H1 (cell line): ENCODE measurements at regions of chr3 and their contacts with region 1.

Region 1: DNA sequence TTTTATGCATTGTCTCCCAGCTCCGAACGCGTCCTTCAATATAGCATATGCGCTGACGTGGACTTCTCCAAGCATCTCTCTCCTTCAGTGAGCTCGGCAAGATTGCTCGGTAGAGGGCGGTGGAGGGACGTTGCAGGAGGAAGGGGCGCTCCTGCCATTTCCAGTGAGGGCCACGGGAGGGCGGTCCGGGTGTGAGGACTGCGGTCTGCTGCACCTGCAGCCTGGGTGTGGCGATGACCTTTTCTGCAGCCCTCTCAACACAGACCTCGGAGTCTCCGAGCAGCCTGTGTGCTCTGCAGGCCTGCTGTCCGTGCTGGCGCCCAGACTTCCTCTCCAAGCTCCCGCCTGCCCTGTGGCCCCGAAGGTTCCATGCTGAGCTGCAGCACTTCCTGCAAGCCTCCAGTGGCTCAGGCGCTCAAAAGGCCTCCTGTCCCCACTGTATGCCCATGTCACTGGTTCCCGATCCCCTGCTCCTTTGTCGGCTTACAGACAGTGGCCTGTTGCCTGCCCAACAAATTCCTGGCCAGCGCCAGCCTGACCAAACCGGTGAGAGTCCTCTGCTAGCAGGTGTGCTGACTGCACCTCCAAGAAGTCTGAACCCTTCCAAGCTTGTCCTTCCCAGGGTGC is 8.9 kb upstream of the RTP3 start:
- DNase-seq: peak; percentile 92 to 98
- H3K4me3 ChIP-seq: no peak overlapping the region
- H3K27ac ChIP-seq: no peak overlapping the region
- H3K4me1 ChIP-seq: peaks cover 4 to 8% (median 6%) of the 10 kb centered on the region in 4 experiments; a peak in 6 of 7 replicates
- H3K27me3 ChIP-seq: no peaks in the 10 kb centered on the region; a peak in 2 of 7 replicates
- CTCF ChIP-seq: peak; percentile 100
- EP300 ChIP-seq: peak; percentile 10 to 47; a peak in 2 of 3 replicates
- POLR2A ChIP-seq: no peak
- RAD21 ChIP-seq: peak; percentile 99 to 100

Region 2: GRCh38 chr3:46395210-46395731 is 93.6 kb before region 1 on chr3:
- CTCF ChIA-PET with region 1: no interaction called
- POLR2A ChIA-PET with region 1: no interaction called
- DNase-seq: no peak
- H3K4me3 ChIP-seq: no peak overlapping the region
- H3K27ac ChIP-seq: no peak overlapping the region
- H3K4me1 ChIP-seq: peaks cover 0 to 6% (median under 1%) of the 10 kb centered on the region in 4 experiments; a peak in 1 of 7 replicates
- H3K27me3 ChIP-seq: no peaks in the 10 kb centered on the region
- CTCF ChIP-seq: peak; percentile 53 to 56 (median 56)
- EP300 ChIP-seq: no peak
- POLR2A ChIP-seq: no peak
- RAD21 ChIP-seq: peak in 1 of 2 experiments; percentile 38; a peak in 2 of 4 replicates

Region 3: GRCh38 chr3:46449755-46450552 is 38.9 kb before region 1 on chr3:
- CTCF ChIA-PET with region 1: interaction called, 11 read pairs
- POLR2A ChIA-PET with region 1: no interaction called
- DNase-seq: peak in 1 of 2 experiments; percentile 67
- H3K4me3 ChIP-seq: no peak overlapping the region
- H3K27ac ChIP-seq: no peak overlapping the region
- H3K4me1 ChIP-seq: no peaks in the 10 kb centered on the region
- H3K27me3 ChIP-seq: no peaks in the 10 kb centered on the region
- CTCF ChIP-seq: peak; percentile 49 to 76 (median 59)
- EP300 ChIP-seq: no peak
- POLR2A ChIP-seq: no peak
- RAD21 ChIP-seq: peak; percentile 40 to 51

Region 4: GRCh38 chr3:46477145-46477544 is 11.7 kb before region 1 on chr3:
- CTCF ChIA-PET with region 1: interaction called, 38 read pairs
- POLR2A ChIA-PET with region 1: no interaction called
- DNase-seq: no peak
- H3K4me3 ChIP-seq: no peak overlapping the region
- H3K27ac ChIP-seq: no peak overlapping the region
- H3K4me1 ChIP-seq: no peaks in the 10 kb centered on the region
- H3K27me3 ChIP-seq: no peaks in the 10 kb centered on the region; a peak in 1 of 7 replicates
- CTCF ChIP-seq: no peak
- EP300 ChIP-seq: no peak
- POLR2A ChIP-seq: no peak
- RAD21 ChIP-seq: no peak

Region 5: GRCh38 chr3:46558184-46559043 is 69.6 kb after region 1 on chr3:
- CTCF ChIA-PET with region 1: interaction called, 45 read pairs
- POLR2A ChIA-PET with region 1: interaction called, 7 read pairs
- DNase-seq: peak in 1 of 2 experiments; percentile 57
- H3K4me3 ChIP-seq: peak overlapping the region in 1 of 4 experiments; percentile 13; a peak in 1 of 8 replicates
- H3K27ac ChIP-seq: no peak overlapping the region
- H3K4me1 ChIP-seq: peaks cover 3 to 12% (median 5%) of the 10 kb centered on the region in 4 experiments; a peak in 5 of 7 replicates
- H3K27me3 ChIP-seq: no peaks in the 10 kb centered on the region; a peak in 1 of 7 replicates
- CTCF ChIP-seq: peak; percentile 67 to 80 (median 71)
- EP300 ChIP-seq: no peak
- POLR2A ChIP-seq: no peak
- RAD21 ChIP-seq: peak; percentile 81 to 85

Region 6: DNA sequence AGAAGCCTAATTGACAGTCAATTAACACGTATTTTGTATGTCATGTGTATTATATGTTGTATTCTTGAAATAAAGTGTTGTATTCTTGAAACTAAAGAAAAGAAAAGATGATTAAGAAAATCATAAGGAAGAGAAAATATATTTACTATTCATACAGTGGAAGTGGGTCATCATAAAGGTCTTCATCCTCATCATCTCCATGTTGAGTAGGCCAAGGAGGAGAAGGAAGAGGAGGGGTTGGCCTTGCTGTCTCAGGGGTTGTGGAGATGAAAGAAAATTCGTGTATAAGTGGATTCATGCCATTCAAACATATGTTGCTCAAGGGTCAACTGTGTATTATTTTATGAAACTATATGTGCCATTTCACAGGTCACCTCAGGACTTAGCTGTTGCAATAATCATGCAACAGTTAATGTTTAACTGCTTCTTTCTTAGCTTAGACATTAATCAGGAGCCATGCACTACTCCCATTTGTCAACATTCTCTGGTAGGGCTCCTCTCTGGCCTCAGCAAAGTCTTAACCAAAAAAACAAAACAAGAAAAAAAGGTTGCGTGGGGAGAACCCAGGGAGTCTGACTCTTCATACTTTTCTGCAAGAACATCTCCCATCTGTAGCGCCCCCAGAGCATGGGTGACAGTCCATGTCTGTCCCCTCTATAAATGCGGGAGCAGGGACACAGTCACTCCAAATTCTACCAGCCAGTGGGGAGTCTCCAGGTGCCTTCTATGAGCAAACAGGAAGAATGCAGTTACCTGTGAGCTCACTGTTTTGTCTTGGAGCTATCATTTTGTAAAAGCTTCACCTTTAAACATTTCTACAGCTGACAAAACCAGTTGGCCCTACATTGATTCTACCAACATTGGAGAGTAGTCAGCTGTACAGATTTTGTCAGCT is 97.2 kb after region 1 on chr3:
- CTCF ChIA-PET with region 1: interaction called, 30 read pairs
- POLR2A ChIA-PET with region 1: interaction called, 49 read pairs
- DNase-seq: no peak
- H3K4me3 ChIP-seq: no peak overlapping the region
- H3K27ac ChIP-seq: no peak overlapping the region
- H3K4me1 ChIP-seq: peaks cover 0 to under 1% (median 0%) of the 10 kb centered on the region in 4 experiments; a peak in 1 of 7 replicates
- H3K27me3 ChIP-seq: no peaks in the 10 kb centered on the region
- CTCF ChIP-seq: no peak
- EP300 ChIP-seq: no peak
- POLR2A ChIP-seq: peak in 1 of 2 experiments; percentile 46; a peak in 1 of 3 replicates
- RAD21 ChIP-seq: no peak

Region 7: GRCh38 chr3:46629551-46630517 is 141.0 kb after region 1 on chr3:
- CTCF ChIA-PET with region 1: interaction called, 82 read pairs
- POLR2A ChIA-PET with region 1: no interaction called
- DNase-seq: peak; percentile 83 to 89
- H3K4me3 ChIP-seq: peak overlapping the region in 3 of 4 experiments; percentile 4 to 47 (median 15); a peak in 4 of 8 replicates
- H3K27ac ChIP-seq: 0 out of 2 replicates have a peak overlapping the region, but pooled peaks have one; percentile 20
- H3K4me1 ChIP-seq: peaks cover 6 to 17% (median 8%) of the 10 kb centered on the region in 4 experiments; a peak in 6 of 7 replicates
- H3K27me3 ChIP-seq: no peaks in the 10 kb centered on the region
- CTCF ChIP-seq: peak; percentile 98 to 100 (median 99)
- EP300 ChIP-seq: no peak; a peak in 1 of 3 replicates
- POLR2A ChIP-seq: no peak
- RAD21 ChIP-seq: peak; percentile 75 to 89

Region 8: GRCh38 chr3:46674031-46674845 is 185.4 kb after region 1 on chr3:
- CTCF ChIA-PET with region 1: interaction called, 10 read pairs
- POLR2A ChIA-PET with region 1: no interaction called
- DNase-seq: no peak
- H3K4me3 ChIP-seq: no peak overlapping the region
- H3K27ac ChIP-seq: no peak overlapping the region
- H3K4me1 ChIP-seq: no peaks in the 10 kb centered on the region; a peak in 1 of 7 replicates
- H3K27me3 ChIP-seq: no peaks in the 10 kb centered on the region
- CTCF ChIP-seq: peak in 2 of 3 experiments; percentile 30 to 53; a peak in 2 of 4 replicates
- EP300 ChIP-seq: no peak
- POLR2A ChIP-seq: no peak
- RAD21 ChIP-seq: peak; percentile 1 to 35; a peak in 1 of 4 replicates